ENCODE measurements at regions of chr6 and their contacts with region 1.

Region 1: GRCh38 chr6:26183581-26184366 is 96.5 kb downstream of the HFE start:
- DNase-seq: no peak
- ATAC-seq: no peak
- H3K4me3 ChIP-seq: no peak overlapping the region
- H3K27ac ChIP-seq: no peak overlapping the region
- H3K4me1 ChIP-seq: peaks cover 0 to 18% of the 10 kb centered on the region in 2 experiments; a peak in 4 of 5 replicates
- H3K27me3 ChIP-seq: no peaks in the 10 kb centered on the region
- CTCF ChIP-seq: no peak
- EP300 ChIP-seq: no peak
- POLR2A ChIP-seq: no peak
- RAD21 ChIP-seq: no peak

Region 2: GRCh38 chr6:26204332-26205165 is 20.8 kb after region 1 on chr6:
- CTCF ChIA-PET with region 1: no interaction called
- POLR2A ChIA-PET with region 1: interaction called, 323 read pairs
- in situ Hi-C with region 1: no loop called
- intact Hi-C with region 1: no loop called
- DNase-seq: peak; percentile 85 to 99 (median 92)
- ATAC-seq: peak; percentile 67
- H3K4me3 ChIP-seq: peak overlapping the region; percentile 57
- H3K27ac ChIP-seq: peak overlapping the region; percentile 99
- H3K4me1 ChIP-seq: peaks cover 9 to 21% of the 10 kb centered on the region in 2 experiments; a peak in 4 of 5 replicates
- H3K27me3 ChIP-seq: no peaks in the 10 kb centered on the region
- CTCF ChIP-seq: peak in 2 of 3 experiments; percentile 67 to 70; a peak in 5 of 6 replicates
- EP300 ChIP-seq: peak; percentile 95
- POLR2A ChIP-seq: peak; percentile 100
- RAD21 ChIP-seq: peak in 1 of 2 experiments; percentile 29; a peak in 2 of 4 replicates

Region 3: DNA sequence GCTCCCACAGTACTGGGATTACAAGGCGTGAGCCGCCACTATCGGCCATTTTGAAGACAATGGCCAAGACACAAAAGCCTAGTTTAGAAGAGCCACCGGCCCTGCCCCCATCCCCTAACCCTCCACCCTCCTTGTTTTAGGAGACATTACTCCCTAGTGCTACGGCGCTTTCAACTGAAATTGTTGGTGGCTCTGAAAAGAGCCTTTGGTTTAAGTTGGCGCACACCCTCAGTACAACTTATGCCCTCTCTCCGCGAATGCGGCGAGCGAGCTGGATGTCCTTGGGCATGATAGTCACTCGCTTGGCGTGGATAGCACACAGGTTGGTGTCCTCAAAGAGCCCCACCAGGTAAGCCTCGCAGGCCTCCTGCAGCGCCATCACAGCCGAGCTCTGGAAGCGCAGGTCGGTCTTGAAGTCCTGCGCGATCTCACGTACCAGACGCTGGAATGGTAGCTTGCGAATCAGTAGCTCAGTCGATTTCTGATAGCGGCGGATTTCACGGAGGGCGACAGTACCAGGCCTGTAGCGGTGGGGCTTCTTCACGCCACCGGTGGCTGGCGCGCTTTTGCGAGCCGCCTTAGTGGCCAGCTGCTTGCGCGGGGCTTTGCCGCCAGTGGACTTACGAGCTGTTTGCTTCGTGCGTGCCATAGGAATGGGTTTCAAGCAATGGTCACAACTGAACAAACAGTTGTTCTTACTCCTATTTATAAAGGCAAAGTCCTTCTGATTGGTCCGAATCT is 66.4 kb after region 1 on chr6:
- CTCF ChIA-PET with region 1: no interaction called
- POLR2A ChIA-PET with region 1: interaction called, 21 read pairs
- in situ Hi-C with region 1: no loop called
- intact Hi-C with region 1: no loop called
- DNase-seq: peak; percentile 39 to 86 (median 51)
- ATAC-seq: peak; percentile 73
- H3K4me3 ChIP-seq: peak overlapping the region; percentile 43
- H3K27ac ChIP-seq: peak overlapping the region; percentile 91
- H3K4me1 ChIP-seq: peaks cover 5 to 12% of the 10 kb centered on the region in 2 experiments; a peak in 3 of 5 replicates
- H3K27me3 ChIP-seq: no peaks in the 10 kb centered on the region
- CTCF ChIP-seq: peak; percentile 27 to 63 (median 42); a peak in 5 of 6 replicates
- EP300 ChIP-seq: 0 out of 2 replicates have a peak, but pooled peaks have one; percentile 28
- POLR2A ChIP-seq: peak; percentile 95
- RAD21 ChIP-seq: no peak; a peak in 2 of 4 replicates